Psoas muscle (tissue), 8 donors: ENCODE measurements at regions of chr1 and their contacts with region 1.

Region 1: DNA sequence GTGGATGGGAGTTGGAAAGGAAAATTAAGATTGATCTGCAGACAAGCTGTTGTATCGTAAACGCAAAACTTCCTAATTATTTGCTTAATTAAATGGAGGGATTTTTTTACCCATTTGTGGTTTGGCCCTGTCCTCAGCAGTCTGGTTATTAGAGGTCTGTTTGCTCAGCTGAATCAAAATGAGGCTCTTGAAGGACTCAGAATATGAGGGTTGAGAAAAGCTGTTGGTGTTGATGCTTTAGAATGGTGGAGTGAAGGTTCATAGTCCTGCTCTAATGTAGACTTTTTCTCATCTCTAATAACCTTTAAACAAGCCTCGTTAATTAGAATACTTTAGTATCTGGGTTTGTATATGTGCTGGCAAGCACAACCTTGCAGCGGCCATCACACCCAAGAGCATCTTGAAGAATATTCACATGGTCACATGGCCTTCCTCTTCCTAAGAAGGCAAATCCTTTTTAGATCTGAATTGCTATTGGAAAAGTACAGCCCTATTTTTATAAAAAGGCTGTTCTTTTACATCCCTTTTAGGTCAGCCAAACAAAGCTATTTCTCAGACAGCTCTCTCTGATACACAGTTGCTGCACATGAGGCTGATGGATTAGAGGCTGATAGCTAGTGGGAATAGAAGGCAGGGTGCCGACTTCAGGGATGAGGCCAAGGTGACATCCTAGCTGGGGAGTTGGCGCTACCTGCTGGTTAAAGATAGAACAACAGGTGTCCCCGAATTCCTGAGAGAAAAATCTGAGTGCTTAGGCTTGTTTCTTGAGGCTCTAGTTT is 53.8 kb downstream of the MACF1 start:
- DNase-seq: peak; percentile 62 to 75
- ATAC-seq: peak; percentile 88 to 92 (median 90)
- H3K4me3 ChIP-seq: no peak overlapping the region
- H3K27ac ChIP-seq: peak overlapping the region; percentile 0
- H3K4me1 ChIP-seq: peaks cover 13% of the 10 kb centered on the region
- H3K27me3 ChIP-seq: no peaks in the 10 kb centered on the region
- CTCF ChIP-seq: peak; percentile 85

Region 2: DNA sequence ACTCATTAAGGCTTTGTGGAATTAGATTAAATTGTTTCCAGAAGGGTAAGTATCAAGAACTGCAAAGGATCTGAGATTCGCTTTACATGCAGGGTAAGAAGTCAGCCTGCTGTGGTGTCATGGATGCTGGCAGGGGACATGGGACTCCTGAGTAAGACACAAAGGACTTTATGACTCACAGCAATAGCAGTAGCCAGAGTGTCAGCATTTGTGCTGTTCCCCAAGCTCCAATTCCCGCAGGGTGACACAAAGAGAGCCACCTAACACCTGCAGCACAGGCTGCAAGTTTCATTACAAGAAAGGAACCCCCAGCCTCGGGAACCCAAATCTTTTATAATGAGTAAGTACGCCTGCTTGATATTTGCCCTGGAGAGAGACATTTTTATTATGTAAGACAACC is 913.6 kb before region 1 on chr1:
- intact Hi-C with region 1: no loop called
- DNase-seq: no peak
- ATAC-seq: no peak
- H3K4me3 ChIP-seq: no peak overlapping the region
- H3K27ac ChIP-seq: no peak overlapping the region
- H3K4me1 ChIP-seq: no peaks in the 10 kb centered on the region
- H3K27me3 ChIP-seq: peaks cover 0 to 10% (median 2%) of the 10 kb centered on the region in 3 donors
- CTCF ChIP-seq: no peak

Region 3: DNA sequence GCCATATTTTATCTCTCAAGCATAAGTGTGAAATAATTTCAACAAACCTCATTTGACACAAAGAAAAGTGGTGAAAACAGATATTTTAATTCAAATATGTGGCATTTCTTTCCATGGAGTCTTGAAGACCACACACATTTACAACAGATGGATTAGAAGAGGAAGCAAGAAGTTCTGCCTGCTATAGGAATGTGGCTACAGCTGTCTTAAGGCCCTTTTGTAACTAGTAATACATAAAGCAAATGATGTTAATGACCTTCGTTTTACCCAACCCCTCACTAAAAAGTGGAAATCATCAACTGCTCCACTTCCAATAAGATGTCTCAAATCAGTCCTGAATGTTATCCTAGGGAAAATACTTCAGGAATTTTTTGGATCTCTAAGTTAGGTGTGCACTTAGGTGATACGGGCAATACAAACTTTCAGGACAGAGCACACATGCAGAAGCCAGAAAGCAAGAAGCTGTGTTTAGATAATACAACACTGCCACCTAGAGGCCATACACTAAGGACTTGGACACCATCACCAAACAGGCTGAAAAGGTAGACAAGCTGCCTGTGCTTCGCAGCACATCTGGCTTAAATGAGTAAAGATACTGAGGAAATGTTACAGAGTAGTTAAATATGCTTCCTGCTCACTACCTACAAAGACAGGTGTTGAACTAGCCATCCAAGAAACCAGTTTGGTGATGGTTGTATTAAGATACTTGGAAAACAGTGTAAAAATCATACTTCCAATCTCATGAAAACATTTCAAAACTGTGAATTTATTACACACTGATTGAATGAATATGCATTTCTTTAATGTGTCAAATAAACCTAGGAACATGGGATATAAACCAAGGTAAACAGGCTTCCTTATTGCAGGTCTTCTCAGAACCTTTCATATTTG is 423.2 kb before region 1 on chr1:
- intact Hi-C with region 1: no loop called
- DNase-seq: no peak
- ATAC-seq: peak; percentile 80 to 95 (median 88)
- H3K4me3 ChIP-seq: no peak overlapping the region
- H3K27ac ChIP-seq: no peak overlapping the region
- H3K4me1 ChIP-seq: peaks cover 6% of the 10 kb centered on the region
- H3K27me3 ChIP-seq: no peaks in the 10 kb centered on the region
- CTCF ChIP-seq: peak; percentile 82

Region 4: DNA sequence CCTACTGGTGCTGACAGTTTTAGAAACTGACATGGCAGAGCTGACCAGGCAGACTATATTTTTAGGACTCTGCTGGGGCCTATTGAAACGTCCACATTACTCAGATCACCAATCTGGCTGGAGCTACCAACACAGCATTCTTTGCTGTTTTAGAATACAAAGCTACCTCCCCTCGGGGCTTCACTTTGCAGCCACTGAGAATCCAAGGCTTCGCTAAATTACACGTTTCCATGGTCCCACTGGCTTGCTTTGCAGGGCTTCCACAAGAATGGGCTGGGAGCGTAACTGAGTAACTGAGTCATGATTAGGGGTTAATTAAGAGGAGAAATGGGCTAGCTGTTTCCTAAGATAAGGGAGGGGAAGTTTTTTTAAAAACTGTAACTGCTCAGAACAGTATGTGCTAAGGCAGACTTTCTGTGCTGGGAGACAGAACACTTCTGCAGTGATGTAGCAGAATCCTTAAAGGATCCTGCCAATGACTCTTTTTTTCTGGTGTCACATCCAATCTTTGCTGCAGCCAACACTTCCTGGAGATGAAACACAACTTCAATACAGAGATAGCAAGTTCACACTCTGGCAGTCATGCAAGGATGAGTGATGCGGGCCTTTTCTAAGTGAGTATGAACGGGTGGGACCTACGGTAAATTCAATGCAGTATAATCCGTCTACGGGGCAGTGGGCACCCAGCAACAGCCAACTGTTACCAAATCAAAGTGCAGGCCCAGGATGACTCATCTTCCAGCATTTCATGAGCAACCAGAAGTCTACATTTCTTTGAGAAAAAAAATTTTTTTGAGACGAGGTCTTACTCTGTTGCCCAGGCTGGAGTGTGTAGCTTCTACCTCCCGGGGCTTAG is 210.7 kb before region 1 on chr1:
- intact Hi-C with region 1: no loop called
- DNase-seq: peak; percentile 57 to 58
- ATAC-seq: peak; percentile 71 to 87 (median 85)
- H3K4me3 ChIP-seq: no peak overlapping the region
- H3K27ac ChIP-seq: peak overlapping the region; percentile 76
- H3K4me1 ChIP-seq: peaks cover 12% of the 10 kb centered on the region
- H3K27me3 ChIP-seq: no peaks in the 10 kb centered on the region
- CTCF ChIP-seq: no peak

Region 5: GRCh38 chr1:39158327-39159086 is 99.8 kb before region 1 on chr1:
- intact Hi-C with region 1: no loop called
- DNase-seq: no peak
- ATAC-seq: peak in 3 of 4 donors; percentile 31 to 55 (median 45)
- H3K4me3 ChIP-seq: peak overlapping the region; percentile 31
- H3K27ac ChIP-seq: no peak overlapping the region
- H3K4me1 ChIP-seq: peaks cover 47% of the 10 kb centered on the region
- H3K27me3 ChIP-seq: no peaks in the 10 kb centered on the region
- CTCF ChIP-seq: no peak

Region 6: GRCh38 chr1:39189592-39190041 is 68.7 kb before region 1 on chr1:
- intact Hi-C with region 1: loop called in 1 of 2 experiments (anchors 5 kb)
- DNase-seq: no peak
- ATAC-seq: no peak
- H3K4me3 ChIP-seq: no peak overlapping the region
- H3K27ac ChIP-seq: peak overlapping the region; percentile 19
- H3K4me1 ChIP-seq: peaks cover 48% of the 10 kb centered on the region
- H3K27me3 ChIP-seq: no peaks in the 10 kb centered on the region
- CTCF ChIP-seq: no peak

Region 7: GRCh38 chr1:39196244-39197215 is 61.8 kb before region 1 on chr1:
- intact Hi-C with region 1: loop called (anchors 5 kb)
- DNase-seq: no peak
- ATAC-seq: no peak
- H3K4me3 ChIP-seq: no peak overlapping the region
- H3K27ac ChIP-seq: peak overlapping the region; percentile 14
- H3K4me1 ChIP-seq: peaks cover 35% of the 10 kb centered on the region
- H3K27me3 ChIP-seq: no peaks in the 10 kb centered on the region
- CTCF ChIP-seq: no peak

Region 8: GRCh38 chr1:39214998-39215873 is 43.1 kb before region 1 on chr1:
- intact Hi-C with region 1: loop called in 1 of 2 experiments (anchors 5 kb)
- DNase-seq: no peak
- ATAC-seq: peak; percentile 15 to 45 (median 26)
- H3K4me3 ChIP-seq: no peak overlapping the region
- H3K27ac ChIP-seq: peak overlapping the region; percentile 18
- H3K4me1 ChIP-seq: peaks cover 36% of the 10 kb centered on the region
- H3K27me3 ChIP-seq: no peaks in the 10 kb centered on the region
- CTCF ChIP-seq: no peak